IMR-90 (cell line): ENCODE measurements at regions of chr14 and their contacts with region 1.

Region 1: DNA sequence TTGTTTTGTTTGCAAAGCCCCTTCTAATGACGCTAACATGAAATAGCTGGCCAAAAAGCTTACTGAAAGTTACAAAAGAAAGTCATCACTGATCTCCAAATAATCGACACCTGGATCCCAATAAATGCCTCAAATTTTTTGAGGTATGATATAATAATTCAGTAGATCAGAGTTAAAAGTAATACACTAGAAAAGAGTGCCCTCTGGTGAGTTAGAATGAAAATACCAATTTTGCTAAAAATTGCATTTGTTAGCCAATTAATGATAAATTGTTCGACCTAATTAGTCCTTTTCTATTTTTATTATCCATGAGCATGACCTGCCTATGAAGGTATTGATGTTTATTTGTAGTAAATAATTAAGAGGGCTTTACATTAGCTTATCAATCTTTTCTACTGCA is 78.6 kb downstream of the CEP128 start:
- DNase-seq: no peak
- ATAC-seq: no peak
- H3K4me3 ChIP-seq: no peak overlapping the region
- H3K27ac ChIP-seq: no peak overlapping the region
- H3K4me1 ChIP-seq: no peaks in the 10 kb centered on the region
- H3K27me3 ChIP-seq: no peaks in the 10 kb centered on the region
- CTCF ChIP-seq: peak; percentile 47
- POLR2A ChIP-seq: no peak
- RAD21 ChIP-seq: peak; percentile 52

Region 2: GRCh38 chr14:78933948-78934524 is 1928.9 kb before region 1 on chr14:
- CTCF ChIA-PET with region 1: no interaction called
- POLR2A ChIA-PET with region 1: no interaction called
- dilution Hi-C with region 1: no loop called
- in situ Hi-C with region 1: no loop called
- intact Hi-C with region 1: loop called (anchors 5 kb)
- DNase-seq: peak; percentile 49
- ATAC-seq: peak; percentile 60
- H3K4me3 ChIP-seq: no peak overlapping the region
- H3K27ac ChIP-seq: no peak overlapping the region
- H3K4me1 ChIP-seq: no peaks in the 10 kb centered on the region
- H3K27me3 ChIP-seq: peaks cover 2% of the 10 kb centered on the region; the same call in 1 of the 2 replicates
- CTCF ChIP-seq: peak; percentile 72
- POLR2A ChIP-seq: no peak
- RAD21 ChIP-seq: peak; percentile 86

Region 3: DNA sequence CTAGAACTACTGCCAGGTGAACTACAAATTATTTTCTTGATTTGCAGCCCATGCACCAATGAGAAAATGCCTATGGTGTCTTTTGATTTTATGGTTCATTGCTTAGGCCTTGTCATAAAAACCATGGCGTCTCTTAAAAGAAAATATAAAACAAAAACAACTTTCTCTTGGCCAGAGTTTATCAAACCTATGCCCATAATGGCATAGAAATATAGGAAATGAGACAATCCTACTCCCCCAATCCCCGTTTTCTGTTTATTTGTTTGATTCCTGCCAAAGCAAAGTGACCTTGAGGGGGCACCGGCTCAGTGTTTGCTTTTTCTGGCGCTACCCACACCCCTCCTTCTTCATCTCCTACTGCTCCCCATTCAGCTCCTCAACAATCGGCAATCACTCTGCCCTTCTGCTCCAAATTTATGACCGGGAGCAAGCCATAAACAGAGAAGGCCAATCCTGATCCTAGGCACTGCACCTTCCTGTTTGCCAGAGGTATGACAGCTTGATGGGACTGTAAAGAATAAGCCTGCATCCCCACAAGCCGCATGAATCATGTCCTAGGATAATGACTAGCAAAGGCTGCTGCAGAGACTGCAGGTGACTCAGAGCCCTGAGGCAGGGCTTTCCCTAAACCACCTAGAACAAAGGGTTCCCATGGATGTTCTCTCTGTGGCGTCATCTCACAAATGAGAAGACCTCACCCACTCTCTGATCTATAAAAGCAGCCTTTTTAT is 1817.9 kb before region 1 on chr14:
- CTCF ChIA-PET with region 1: no interaction called
- POLR2A ChIA-PET with region 1: interaction called, 11 read pairs
- dilution Hi-C with region 1: no loop called
- in situ Hi-C with region 1: no loop called
- intact Hi-C with region 1: no loop called
- DNase-seq: peak; percentile 88
- ATAC-seq: no peak
- H3K4me3 ChIP-seq: no peak overlapping the region
- H3K27ac ChIP-seq: no peak overlapping the region
- H3K4me1 ChIP-seq: no peaks in the 10 kb centered on the region
- H3K27me3 ChIP-seq: peaks cover 10% of the 10 kb centered on the region; the same call in 1 of the 2 replicates
- CTCF ChIP-seq: no peak
- POLR2A ChIP-seq: no peak
- RAD21 ChIP-seq: no peak

Region 4: DNA sequence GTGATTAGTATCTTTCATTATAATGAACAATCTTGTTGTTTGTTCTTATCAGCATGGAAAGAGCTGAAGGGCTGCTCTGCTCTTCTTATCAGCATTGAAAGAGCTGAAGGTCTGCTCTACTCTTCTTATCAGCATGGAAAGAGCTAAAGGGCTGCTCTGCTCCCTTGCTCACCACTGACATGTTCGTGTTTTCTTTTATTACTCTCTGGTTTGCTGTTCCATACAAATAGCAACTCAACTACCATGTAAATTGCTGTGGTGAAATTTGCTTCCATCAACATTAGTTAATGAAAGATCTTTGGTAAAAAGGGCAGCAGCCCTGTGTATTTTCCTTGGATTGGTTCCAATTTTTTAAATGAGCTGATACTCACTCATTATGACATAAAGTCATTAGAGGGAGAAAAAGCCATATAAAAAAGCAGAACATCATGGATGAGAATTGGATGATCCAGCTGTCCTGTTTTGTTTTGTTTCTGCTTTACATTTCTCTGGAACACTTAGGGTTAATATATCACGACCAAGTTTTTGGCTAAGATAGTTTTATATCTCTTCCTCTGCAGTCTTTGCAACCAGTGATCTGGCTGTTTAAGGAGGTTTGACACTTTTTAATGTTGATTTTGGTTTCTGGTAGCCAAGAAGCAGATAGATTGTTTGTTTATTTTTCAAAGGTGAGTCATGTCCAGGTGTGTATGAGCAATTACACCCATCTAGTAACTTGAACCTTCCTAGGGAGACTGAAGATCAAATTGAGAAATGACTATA is 278.1 kb before region 1 on chr14:
- CTCF ChIA-PET with region 1: no interaction called
- POLR2A ChIA-PET with region 1: no interaction called
- dilution Hi-C with region 1: no loop called
- in situ Hi-C with region 1: no loop called
- intact Hi-C with region 1: no loop called
- DNase-seq: peak; percentile 82
- ATAC-seq: peak; percentile 30
- H3K4me3 ChIP-seq: no peak overlapping the region
- H3K27ac ChIP-seq: no peak overlapping the region
- H3K4me1 ChIP-seq: peaks cover 1% of the 10 kb centered on the region; the same call in 1 of the 2 replicates
- H3K27me3 ChIP-seq: no peaks in the 10 kb centered on the region
- CTCF ChIP-seq: no peak
- POLR2A ChIP-seq: no peak
- RAD21 ChIP-seq: no peak